OCI-LY7 (cell line): ENCODE measurements at regions of chr1 and their contacts with region 1.

Region 1: GRCh38 chr1:158203693-158204457 is 23.2 kb downstream of the CD1D start:
- DNase-seq: peak; percentile 75
- H3K4me3 ChIP-seq: no peak overlapping the region
- H3K27ac ChIP-seq: no peak overlapping the region
- H3K4me1 ChIP-seq: peaks cover 6% of the 10 kb centered on the region
- CTCF ChIP-seq: peak; percentile 98

Region 2: GRCh38 chr1:158329733-158330132 is 125.9 kb after region 1 on chr1:
- CTCF ChIA-PET with region 1: interaction called, 13 read pairs
- POLR2A ChIA-PET with region 1: interaction called, 3 read pairs
- intact Hi-C with region 1: loop called (anchors 1 kb)
- DNase-seq: peak; percentile 68
- H3K4me3 ChIP-seq: no peak overlapping the region
- H3K27ac ChIP-seq: no peak overlapping the region
- H3K4me1 ChIP-seq: peaks cover 19% of the 10 kb centered on the region
- CTCF ChIP-seq: peak; percentile 92

Region 3: GRCh38 chr1:158496374-158496773 is 292.5 kb after region 1 on chr1:
- CTCF ChIA-PET with region 1: interaction called, 3 read pairs
- POLR2A ChIA-PET with region 1: no interaction called
- intact Hi-C with region 1: loop called (anchors 10 kb)
- DNase-seq: peak; percentile 24
- H3K4me3 ChIP-seq: no peak overlapping the region
- H3K27ac ChIP-seq: no peak overlapping the region
- H3K4me1 ChIP-seq: no peaks in the 10 kb centered on the region
- CTCF ChIP-seq: peak; percentile 67